ENCODE measurements at regions of chr14 and their contacts with region 1.

Region 1: DNA sequence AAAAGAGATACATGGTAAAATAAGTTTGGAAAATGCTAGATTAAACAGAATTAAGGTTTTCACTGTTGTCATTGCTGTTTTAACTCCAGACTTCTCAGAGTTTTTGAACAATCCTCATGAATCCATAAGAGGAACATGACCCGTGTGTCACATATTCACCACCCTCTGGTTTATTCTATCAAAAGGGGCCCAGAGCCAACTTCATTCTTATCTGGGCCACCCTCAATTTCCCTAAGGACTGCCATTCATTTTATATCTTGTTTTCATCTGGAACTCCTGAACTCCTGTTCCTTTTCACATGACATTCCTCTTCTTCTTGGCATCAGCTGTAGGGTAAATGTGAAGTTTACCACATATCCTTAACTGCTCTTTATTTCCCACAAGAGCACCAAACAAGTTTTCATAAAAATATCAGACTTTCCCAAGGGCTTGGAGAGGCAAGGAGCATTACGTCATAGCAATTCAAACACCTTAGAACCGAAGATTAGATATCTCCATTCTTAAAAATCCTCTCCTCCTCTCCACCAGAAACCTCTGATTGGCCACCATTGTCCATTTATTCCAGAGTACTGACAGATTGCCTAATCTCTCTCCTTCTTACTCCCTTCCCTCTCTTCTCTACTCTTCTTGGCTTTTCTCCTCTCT is 225.2 kb downstream of the SEC23A start:
- DNase-seq: no peak
- H3K4me3 ChIP-seq: no peak overlapping the region
- H3K27ac ChIP-seq: no peak overlapping the region
- H3K4me1 ChIP-seq: no peaks in the 10 kb centered on the region; a peak in 1 of 4 replicates
- H3K27me3 ChIP-seq: no peaks in the 10 kb centered on the region; the same call in 1 of the 2 replicates
- CTCF ChIP-seq: no peak
- EP300 ChIP-seq: no peak
- RAD21 ChIP-seq: no peak

Region 2: GRCh38 chr14:38839743-38840365 is 38.0 kb before region 1 on chr14:
- CTCF ChIA-PET with region 1: no interaction called
- POLR2A ChIA-PET with region 1: no interaction called
- DNase-seq: no peak
- H3K4me3 ChIP-seq: no peak overlapping the region
- H3K27ac ChIP-seq: no peak overlapping the region
- H3K4me1 ChIP-seq: no peaks in the 10 kb centered on the region; a peak in 1 of 4 replicates
- H3K27me3 ChIP-seq: no peaks in the 10 kb centered on the region; the same call in 1 of the 2 replicates
- CTCF ChIP-seq: no peak
- EP300 ChIP-seq: no peak
- RAD21 ChIP-seq: no peak

Region 3: DNA sequence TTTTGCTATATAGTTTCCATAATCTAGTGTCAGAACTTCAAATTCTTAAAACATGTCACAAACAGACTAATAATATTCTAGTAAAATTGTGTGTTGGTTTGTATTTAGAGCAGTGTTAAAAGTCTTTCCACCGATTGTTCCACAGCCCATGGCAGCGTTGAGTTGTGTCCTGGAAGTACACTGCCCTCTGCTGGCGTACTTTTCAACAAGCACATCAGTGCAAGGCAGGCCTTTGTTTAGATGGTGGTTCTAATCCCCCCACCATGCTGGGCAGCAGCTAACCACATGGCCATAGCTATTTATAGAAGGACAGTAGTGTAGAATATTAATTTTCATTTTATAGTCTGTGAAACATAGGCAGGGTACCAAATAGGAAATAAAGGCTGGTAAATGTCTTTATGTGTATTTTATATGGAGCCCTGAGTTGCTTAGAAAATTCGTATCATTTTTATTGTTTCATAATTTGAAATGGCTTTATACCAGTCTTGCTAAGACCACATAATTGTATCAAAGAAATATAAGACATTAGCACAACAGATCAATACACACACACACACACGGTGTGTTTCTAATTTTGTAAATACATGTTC is 10.2 kb before region 1 on chr14:
- CTCF ChIA-PET with region 1: interaction called, 11 read pairs
- POLR2A ChIA-PET with region 1: no interaction called
- DNase-seq: peak; percentile 25
- H3K4me3 ChIP-seq: peak overlapping the region in 1 of 2 experiments; percentile 43; a peak in 1 of 4 replicates
- H3K27ac ChIP-seq: no peak overlapping the region
- H3K4me1 ChIP-seq: no peaks in the 10 kb centered on the region
- H3K27me3 ChIP-seq: no peaks in the 10 kb centered on the region
- CTCF ChIP-seq: peak; percentile 71
- EP300 ChIP-seq: no peak
- RAD21 ChIP-seq: peak; percentile 74

Measured in SK-N-SH (cell line).